Tibial artery (tissue), 4 donors: ENCODE measurements at regions of chr14 and their contacts with region 1.

Region 1: GRCh38 chr14:88667555-88668273 is 104.9 kb downstream of the ZC3H14 start:
- DNase-seq: peak; percentile 37 to 69
- H3K4me3 ChIP-seq: no peak overlapping the region
- H3K27ac ChIP-seq: no peak overlapping the region
- H3K4me1 ChIP-seq: peaks cover 0 to 7% (median 2%) of the 10 kb centered on the region in 4 donors
- H3K27me3 ChIP-seq: no peaks in the 10 kb centered on the region
- CTCF ChIP-seq: peak; percentile 72 to 78

Region 2: DNA sequence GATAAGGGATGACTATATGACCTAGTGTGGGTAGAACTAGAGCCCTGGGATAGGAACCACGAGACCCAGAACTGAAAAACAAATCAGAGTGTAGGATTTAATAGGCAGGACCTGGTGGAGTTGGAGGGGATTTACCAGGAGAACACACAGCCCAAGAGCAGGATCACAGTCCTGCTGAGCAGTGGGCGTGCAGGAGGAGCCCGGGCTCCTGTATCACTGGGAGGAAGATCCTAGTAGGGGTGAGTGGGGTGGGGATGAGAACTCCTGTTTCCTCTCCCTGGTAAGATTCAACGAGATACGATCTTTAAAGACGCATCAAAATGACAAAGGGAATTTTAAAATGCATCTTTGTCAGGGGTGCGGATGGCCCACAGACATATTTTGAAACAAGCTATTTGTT is 894.9 kb before region 1 on chr14:
- intact Hi-C with region 1: no loop called
- DNase-seq: no peak
- H3K4me3 ChIP-seq: no peak overlapping the region
- H3K27ac ChIP-seq: no peak overlapping the region
- H3K4me1 ChIP-seq: no peaks in the 10 kb centered on the region
- H3K27me3 ChIP-seq: no peaks in the 10 kb centered on the region
- CTCF ChIP-seq: no peak

Region 3: GRCh38 chr14:88868558-88869159 is 200.9 kb after region 1 on chr14:
- intact Hi-C with region 1: loop called (anchors 5 kb)
- DNase-seq: no peak
- H3K4me3 ChIP-seq: no peak overlapping the region
- H3K27ac ChIP-seq: no peak overlapping the region
- H3K4me1 ChIP-seq: no peaks in the 10 kb centered on the region
- H3K27me3 ChIP-seq: no peaks in the 10 kb centered on the region
- CTCF ChIP-seq: peak; percentile 33 to 43